GM18951 (cell line): ENCODE measurements at regions of chr2 and their contacts with region 1.

Region 1: GRCh38 chr2:138787053-138787666 is 7.0 kb upstream of the NXPH2 start:
- POLR2A ChIP-seq: no peak

Region 2: DNA sequence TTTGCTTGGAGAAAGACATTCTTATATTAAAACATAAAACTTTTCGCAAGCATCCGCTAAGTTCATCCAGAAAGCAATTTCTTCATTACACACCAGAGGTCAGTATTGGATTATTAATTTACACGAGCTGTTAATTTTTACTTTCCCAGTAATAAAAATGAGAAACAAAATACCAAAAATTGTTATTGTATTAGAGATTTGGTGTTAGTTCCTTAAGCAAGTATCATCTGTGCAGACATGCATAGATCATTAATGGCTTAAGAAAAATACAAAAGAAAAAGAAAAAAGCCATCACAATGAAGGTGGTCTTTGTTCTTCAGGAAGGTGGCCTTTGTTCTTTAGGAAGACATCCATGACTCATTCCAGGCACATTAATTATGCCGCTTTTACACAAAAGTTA is 876.5 kb before region 1 on chr2:
- in situ Hi-C with region 1: loop called (anchors 25 kb)
- POLR2A ChIP-seq: no peak

Region 3: GRCh38 chr2:138395565-138396306 is 391.4 kb before region 1 on chr2:
- in situ Hi-C with region 1: loop called (anchors 25 kb)
- POLR2A ChIP-seq: no peak